Breast epithelium (tissue), 4 donors: ENCODE measurements at regions of chr22 and their contacts with region 1.

Region 1: DNA sequence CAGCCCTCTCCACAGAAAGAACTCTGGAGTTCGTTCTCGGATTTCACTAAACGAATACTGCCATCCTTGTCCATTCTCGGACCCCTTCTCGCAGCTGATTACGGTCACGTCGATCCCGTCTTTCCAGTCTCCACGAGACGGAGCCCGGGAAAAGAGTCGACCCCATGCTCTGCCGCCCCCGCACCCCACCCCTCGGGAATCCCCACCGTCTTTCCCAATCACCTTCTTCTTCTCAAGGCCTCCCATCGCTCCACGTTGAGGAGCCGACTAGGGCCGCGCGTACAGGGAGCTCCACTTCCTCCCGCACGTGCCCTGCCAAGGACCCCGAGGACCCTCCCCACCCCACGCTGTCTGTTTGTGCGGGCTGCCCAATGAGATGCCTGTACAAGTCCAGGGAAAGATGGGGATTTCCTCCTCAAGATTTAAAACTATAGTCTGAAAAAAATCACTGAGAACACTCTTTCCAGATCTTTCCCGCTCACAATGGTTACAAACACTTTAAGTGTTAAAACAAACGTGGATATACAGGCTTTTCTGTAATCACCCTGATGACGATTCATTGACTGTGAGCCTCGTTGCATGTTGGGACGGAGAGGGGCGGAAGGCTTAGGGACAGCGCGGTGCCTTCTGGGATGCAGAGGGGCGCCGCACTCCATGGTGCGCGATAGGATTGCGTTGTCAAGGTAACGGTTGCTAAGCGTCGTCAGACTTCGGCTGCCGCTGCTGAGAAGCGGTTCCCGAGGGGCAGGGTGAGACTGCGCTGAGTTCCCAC is at the start of gene PES1:
- DNase-seq: peak; percentile 91
- H3K4me3 ChIP-seq: peak within 1 kb of the TSS; percentile 80 to 93 (median 89)
- H3K27ac ChIP-seq: peak within 1 kb of the TSS; percentile 85 to 89
- H3K4me1 ChIP-seq: peaks cover 5 to 15% of the 10 kb centered on the region in 2 donors
- H3K27me3 ChIP-seq: no peaks in the 10 kb centered on the region
- CTCF ChIP-seq: no peak
- POLR2A ChIP-seq: peak; percentile 9
- total RNA-seq, gene PES1: 45.3 to 65.1 (median 56.4) TPM

Region 2: GRCh38 chr22:30408414-30409104 is 183.2 kb before region 1 on chr22:
- intact Hi-C with region 1: no loop called
- DNase-seq: no peak
- H3K4me3 ChIP-seq: no peak overlapping the region
- H3K27ac ChIP-seq: peak overlapping the region; percentile 40 to 77
- H3K4me1 ChIP-seq: no peaks in the 10 kb centered on the region
- H3K27me3 ChIP-seq: no peaks in the 10 kb centered on the region
- CTCF ChIP-seq: no peak
- POLR2A ChIP-seq: no peak

Region 3: DNA sequence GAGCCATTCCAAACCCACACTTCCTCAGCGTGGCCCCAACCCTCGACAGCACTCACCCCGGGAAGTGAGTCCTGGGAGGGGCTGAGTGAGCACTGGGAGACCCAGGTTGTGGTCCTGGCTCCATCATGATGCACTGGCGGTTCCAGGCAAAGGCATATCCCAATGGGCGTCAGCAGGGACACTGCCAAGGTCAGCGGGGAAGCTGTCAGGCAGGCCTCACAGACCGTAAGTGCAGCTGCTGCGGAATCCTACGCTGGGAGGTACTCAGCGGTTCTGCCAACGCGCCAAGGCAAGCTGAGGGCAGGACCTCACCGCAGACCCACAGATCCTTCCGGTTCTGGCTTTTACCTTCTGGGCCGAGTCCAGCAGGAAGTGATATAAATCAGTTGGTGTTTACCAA is 15.9 kb before region 1 on chr22:
- intact Hi-C with region 1: loop called (anchors 1 kb)
- DNase-seq: peak in 1 of 2 donors; percentile 23
- H3K4me3 ChIP-seq: no peak overlapping the region
- H3K27ac ChIP-seq: peak overlapping the region; percentile 21 to 69
- H3K4me1 ChIP-seq: no peaks in the 10 kb centered on the region
- H3K27me3 ChIP-seq: no peaks in the 10 kb centered on the region
- CTCF ChIP-seq: no peak
- POLR2A ChIP-seq: no peak

Region 4: GRCh38 chr22:31595271-31595670 is 1003.5 kb after region 1 on chr22:
- intact Hi-C with region 1: loop called (anchors 10 kb)
- DNase-seq: no peak
- H3K4me3 ChIP-seq: no peak overlapping the region
- H3K27ac ChIP-seq: no peak overlapping the region
- H3K4me1 ChIP-seq: no peaks in the 10 kb centered on the region
- H3K27me3 ChIP-seq: no peaks in the 10 kb centered on the region
- CTCF ChIP-seq: no peak
- POLR2A ChIP-seq: no peak